Spleen (tissue), 13 donors: ENCODE measurements at regions of chr16 and their contacts with region 1.

Region 1: DNA sequence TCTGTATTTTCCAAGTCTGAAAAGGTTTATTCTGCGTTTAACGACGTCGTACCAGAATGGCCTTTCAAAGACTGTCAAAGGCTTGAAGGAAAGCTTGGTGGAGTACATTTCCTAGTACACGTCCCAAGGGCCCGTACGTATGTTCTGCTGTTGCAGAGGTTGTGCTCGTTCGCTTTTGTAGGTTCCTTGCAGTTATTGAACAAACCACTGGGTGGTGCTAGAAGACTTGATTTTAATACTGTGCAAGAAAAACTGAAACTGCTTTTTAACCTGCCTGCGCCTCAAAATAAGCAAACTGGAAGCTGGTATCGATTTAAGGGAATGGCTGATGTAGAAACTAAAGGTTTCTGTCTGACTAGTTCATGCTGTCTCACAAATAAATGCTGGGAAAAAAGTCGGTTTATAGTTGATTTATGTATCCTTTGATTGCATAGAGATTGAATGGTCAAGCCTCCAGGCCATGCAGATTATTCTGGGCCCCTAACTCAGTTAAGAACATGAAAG is 54.6 kb downstream of the USP10 start:
- DNase-seq: no peak
- H3K4me3 ChIP-seq: peak overlapping the region in 1 of 8 donors; percentile 30
- H3K27ac ChIP-seq: peak overlapping the region in 4 of 8 donors; percentile 53 to 80 (median 60)
- H3K4me1 ChIP-seq: peaks cover 42 to 93% (median 62%) of the 10 kb centered on the region in 6 donors
- H3K27me3 ChIP-seq: no peaks in the 10 kb centered on the region
- CTCF ChIP-seq: peak; percentile 82 to 95 (median 87)
- POLR2A ChIP-seq: no peak

Region 2: DNA sequence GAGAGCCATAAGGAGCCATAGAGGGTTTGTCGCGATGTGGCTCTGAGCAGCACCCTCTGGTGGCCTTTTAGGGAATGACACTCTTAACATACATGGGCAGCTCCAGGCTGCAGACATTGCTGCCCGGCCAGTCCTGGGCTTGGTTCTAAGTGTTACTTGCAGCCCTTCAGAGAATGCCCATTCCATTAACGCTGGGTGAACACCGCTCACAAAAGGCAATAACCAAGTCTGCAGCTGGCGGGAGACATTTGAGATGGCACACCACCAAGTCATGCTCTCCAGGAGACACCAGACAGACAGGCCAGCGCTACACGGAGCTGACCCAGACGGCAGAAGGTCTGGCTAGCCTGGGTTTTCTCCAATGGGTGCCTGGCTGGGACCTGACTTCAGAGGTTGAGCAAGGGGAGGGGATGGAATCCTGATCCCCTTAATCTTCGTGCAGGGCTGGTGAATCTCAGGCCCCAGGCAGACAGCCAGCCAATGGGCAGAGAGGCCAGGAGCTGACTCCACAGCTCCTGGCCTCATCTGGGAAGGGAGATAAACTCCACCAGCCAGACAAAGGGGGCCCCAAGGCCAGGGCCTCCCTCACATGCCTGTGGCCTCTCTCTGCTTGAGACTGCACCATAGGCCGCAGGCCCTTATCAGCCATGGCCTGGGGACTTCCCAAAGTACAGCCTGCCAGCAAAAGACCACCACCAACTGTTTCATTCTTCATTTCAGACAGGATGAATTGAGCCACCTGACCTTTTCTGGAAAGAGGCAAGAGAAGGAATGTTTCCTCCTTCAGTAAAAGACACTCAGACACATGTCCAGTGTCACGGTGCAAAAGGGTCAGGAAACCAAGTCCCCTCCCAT is 198.2 kb after region 1 on chr16:
- intact Hi-C with region 1: loop called (anchors 5 kb)
- DNase-seq: peak; percentile 87
- H3K4me3 ChIP-seq: no peak overlapping the region
- H3K27ac ChIP-seq: peak overlapping the region; percentile 29 to 70 (median 48)
- H3K4me1 ChIP-seq: peaks cover 11 to 45% (median 24%) of the 10 kb centered on the region in 6 donors
- H3K27me3 ChIP-seq: no peaks in the 10 kb centered on the region
- CTCF ChIP-seq: peak; percentile 78 to 97 (median 93)
- POLR2A ChIP-seq: no peak

Region 3: DNA sequence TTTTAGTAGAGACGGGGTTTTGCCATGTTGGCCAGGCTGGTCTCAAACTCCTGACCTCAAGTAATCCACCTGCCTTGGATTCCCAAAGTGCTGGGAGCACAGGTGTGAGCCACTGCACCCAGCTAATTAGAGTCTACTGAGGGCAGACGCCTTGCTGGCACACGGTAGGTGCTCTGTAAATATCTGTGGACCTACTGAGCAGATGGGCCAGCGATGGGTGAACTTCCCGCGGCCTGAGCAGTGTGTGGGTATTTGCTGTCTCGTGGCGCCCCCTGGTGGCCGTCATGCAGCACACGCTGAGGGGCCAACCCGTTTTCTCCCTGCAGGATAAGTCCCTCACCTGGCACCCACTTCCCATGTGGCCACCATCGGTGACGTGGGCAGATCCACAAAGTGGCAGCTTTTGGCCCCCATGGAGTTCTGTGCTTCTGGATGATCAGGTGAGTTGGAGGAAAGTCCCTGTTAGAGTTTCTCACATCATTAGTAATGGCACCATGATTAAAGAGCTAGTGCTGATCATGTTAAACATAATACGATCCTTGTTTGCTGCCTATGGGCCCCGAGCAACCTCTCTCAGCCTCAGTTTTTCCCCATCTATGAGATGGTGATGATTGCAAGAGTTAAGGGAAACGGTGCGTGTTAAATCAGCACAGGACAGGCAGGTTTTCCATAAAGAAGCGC is 216.2 kb after region 1 on chr16:
- intact Hi-C with region 1: loop called (anchors 5 kb)
- DNase-seq: peak; percentile 93
- H3K4me3 ChIP-seq: no peak overlapping the region
- H3K27ac ChIP-seq: no peak overlapping the region
- H3K4me1 ChIP-seq: peaks cover 0 to 9% (median 3%) of the 10 kb centered on the region in 6 donors
- H3K27me3 ChIP-seq: peaks cover 0 to 7% (median 0%) of the 10 kb centered on the region in 7 donors
- CTCF ChIP-seq: peak; percentile 83 to 97 (median 95)
- POLR2A ChIP-seq: no peak

Region 4: DNA sequence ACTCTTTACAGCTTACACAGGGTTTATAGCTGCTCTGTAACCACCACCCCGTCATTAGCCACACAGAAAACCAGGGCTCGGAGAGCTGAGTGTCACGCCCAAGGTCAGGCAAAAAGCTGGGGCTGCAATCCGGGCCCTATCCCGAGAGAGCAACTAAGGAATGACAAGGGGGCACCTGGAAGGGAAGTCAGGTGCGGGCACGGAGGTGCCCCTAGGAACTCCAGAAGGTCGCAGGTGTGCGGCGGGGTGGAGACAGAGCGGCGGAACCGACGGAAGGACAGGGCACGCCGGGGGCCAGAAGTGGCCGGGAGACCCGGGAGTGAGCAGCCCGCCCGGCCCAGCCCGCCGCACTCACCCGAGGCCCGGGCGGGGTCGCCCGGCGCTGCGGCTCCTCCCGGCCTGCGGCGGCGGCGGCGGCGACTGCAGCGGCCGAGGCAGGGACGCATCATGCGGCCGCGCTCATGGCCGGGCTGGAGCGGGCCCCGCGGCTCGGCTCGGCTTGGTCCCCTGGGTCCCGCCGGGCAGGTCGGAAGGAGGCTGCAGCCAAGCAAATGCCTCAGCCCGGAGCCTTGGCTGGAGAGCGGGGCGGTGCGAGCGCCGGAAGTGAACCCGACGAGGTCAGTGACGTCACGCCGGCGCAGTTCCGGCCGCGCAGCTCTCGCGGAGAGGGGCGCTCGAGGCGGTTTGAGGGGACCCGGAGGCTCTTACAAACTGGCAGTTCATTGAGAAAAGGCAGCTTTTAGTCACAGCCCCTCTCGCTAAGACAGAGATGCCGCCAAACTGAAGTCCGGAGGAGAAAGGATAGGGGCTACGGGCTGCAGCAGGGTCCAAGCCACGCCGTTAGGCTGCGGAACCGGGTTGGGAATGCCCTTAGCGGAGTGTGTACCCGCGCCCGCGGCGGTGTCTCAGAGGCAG is 256.8 kb after region 1 on chr16 and contains the start of gene ZDHHC7:
- intact Hi-C with region 1: no loop called
- DNase-seq: peak; percentile 96
- H3K4me3 ChIP-seq: peak within 1 kb of the TSS; percentile 68 to 89 (median 79)
- H3K27ac ChIP-seq: peak within 1 kb of the TSS; percentile 93 to 98 (median 97)
- H3K4me1 ChIP-seq: peaks cover 27 to 78% (median 48%) of the 10 kb centered on the region in 6 donors
- H3K27me3 ChIP-seq: no peaks in the 10 kb centered on the region
- CTCF ChIP-seq: peak in 1 of 11 experiments; percentile 7
- POLR2A ChIP-seq: peak; percentile 71 to 89 (median 78)
- total RNA-seq, gene ZDHHC7: 39.3 to 87.1 (median 52.3) TPM